Endothelial cell of umbilical vein (primary cell): ENCODE measurements at regions of chr20 and their contacts with region 1.

Region 1: DNA sequence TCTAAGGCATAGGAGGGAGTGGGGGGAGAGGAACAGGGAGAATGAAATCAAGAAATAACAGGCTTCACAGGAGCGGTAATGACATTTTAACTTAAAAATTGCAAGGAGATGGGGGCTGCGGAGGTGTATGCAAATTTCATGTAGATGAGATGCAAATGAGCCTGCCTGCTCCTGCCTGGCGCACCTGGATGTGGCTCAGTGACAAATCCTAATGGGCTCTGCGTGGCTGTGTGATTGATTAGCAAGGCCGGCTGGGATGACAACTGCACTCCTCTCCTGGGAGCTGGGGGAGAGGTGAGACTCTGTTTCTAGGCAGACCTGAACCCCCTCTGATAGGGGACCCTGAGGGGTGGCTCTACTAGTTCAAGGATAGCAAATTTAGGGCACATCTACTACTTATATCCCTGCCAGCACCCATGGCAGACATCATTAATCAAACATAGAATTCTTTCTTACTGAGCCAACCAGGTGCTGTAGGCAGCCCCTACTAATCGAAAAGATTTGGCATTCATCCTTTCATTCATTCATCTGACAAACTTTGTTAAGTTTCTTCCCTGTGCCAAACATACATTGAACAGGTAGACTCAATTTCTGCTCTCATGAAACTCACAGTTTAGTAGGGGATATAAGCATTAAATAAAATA is 38.4 kb upstream of the TGM2 start:
- DNase-seq: no peak
- H3K4me3 ChIP-seq: no peak overlapping the region
- H3K27ac ChIP-seq: no peak overlapping the region
- H3K4me1 ChIP-seq: no peaks in the 10 kb centered on the region
- H3K27me3 ChIP-seq: peaks cover 0 to 2% of the 10 kb centered on the region in 2 experiments
- CTCF ChIP-seq: no peak
- POLR2A ChIP-seq: no peak

Region 2: DNA sequence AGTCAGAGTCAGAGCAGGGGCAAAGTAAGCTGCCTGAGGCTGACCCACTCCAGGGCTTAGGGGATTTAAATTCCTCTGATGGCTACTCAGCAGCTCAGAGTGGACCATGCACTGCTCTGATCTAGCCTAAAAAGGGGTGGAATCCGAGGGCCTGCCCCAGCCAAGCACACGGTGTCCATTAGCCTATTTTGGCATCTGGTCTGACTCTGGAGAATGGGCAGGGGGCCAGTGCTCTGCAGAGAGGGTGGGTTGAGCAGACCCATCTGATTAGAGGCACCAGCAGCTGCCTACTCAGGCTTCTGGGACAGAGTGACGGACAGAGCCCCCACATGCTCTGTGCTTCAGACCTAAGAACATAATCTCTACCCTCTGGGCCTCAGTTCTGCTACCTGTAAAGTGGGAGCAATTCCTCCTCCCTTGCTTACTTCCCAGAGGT is 12.5 kb before region 1 on chr20:
- CTCF ChIA-PET with region 1: interaction called, 11 read pairs
- POLR2A ChIA-PET with region 1: no interaction called
- dilution Hi-C with region 1: no loop called
- intact Hi-C with region 1: no loop called
- DNase-seq: no peak
- H3K4me3 ChIP-seq: no peak overlapping the region
- H3K27ac ChIP-seq: no peak overlapping the region
- H3K4me1 ChIP-seq: peaks cover 17% of the 10 kb centered on the region
- H3K27me3 ChIP-seq: no peaks in the 10 kb centered on the region
- CTCF ChIP-seq: no peak
- POLR2A ChIP-seq: no peak